ENCODE measurements at regions of chr5 and their contacts with region 1.

Region 1: DNA sequence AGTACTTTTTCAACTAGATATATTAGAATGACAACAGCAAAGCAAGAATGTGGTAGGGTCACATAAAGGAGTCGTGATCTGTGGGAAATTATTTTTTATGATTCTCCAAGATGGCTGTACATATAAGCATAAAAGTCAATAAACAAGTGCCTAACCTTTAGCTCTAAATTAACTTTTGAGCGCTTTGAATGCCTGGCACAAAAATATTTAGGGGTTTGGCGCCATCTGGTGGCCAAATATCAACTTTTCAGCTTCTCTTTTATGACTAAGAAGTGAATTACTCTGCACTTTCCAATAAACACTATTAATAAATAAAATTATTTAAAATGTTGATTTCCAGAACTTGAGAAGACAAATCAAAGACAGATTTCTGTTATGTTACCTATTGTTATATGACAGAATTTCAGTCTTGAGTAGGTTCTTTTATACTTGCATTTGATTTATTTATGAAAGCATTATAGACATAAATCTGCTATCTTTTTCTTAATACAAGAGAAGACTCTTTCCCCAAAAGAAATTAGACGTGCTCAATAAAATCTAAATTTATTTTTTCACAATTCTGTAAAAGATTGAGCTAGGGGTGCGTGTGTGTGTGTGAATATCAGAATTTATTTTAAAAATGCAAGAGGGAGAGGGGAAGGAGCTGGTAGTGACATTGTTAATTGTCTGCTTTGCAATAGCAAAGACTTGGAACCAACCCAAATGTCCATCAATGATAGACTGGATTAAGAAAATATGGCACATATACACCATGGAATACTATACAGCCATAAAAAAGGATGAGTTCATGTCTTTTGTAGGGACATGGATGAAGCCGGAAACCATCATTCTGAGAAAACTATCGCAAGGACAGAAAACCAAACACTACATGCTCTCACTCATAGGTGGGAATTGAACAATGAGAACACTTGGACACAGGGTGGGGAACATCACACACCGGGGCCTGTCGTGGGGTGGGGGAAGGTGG is 36.7 kb upstream of the ARRDC3 start:
- DNase-seq: peak; percentile 83
- H3K4me3 Mint-ChIP-seq: no peak overlapping the region
- H3K27ac Mint-ChIP-seq: no peak overlapping the region
- H3K4me1 Mint-ChIP-seq: peaks cover 8% of the 10 kb centered on the region
- H3K27me3 Mint-ChIP-seq: no peaks in the 10 kb centered on the region

Region 2: GRCh38 chr5:90802474-90803317 is 617.2 kb before region 1 on chr5:
- CTCF ChIA-PET with region 1: interaction called, 15 read pairs
- intact Hi-C with region 1: loop called (anchors 1 kb)
- DNase-seq: peak; percentile 21
- H3K4me3 Mint-ChIP-seq: no peak overlapping the region
- H3K27ac Mint-ChIP-seq: no peak overlapping the region
- H3K4me1 Mint-ChIP-seq: no peaks in the 10 kb centered on the region
- H3K27me3 Mint-ChIP-seq: peaks cover 4% of the 10 kb centered on the region

Region 3: GRCh38 chr5:90932052-90932699 is 487.7 kb before region 1 on chr5:
- CTCF ChIA-PET with region 1: interaction called, 19 read pairs
- intact Hi-C with region 1: loop called (anchors 1 kb)
- DNase-seq: peak; percentile 65
- H3K4me3 Mint-ChIP-seq: no peak overlapping the region
- H3K27ac Mint-ChIP-seq: no peak overlapping the region
- H3K4me1 Mint-ChIP-seq: peaks cover 5% of the 10 kb centered on the region
- H3K27me3 Mint-ChIP-seq: peaks cover 8% of the 10 kb centered on the region

Region 4: DNA sequence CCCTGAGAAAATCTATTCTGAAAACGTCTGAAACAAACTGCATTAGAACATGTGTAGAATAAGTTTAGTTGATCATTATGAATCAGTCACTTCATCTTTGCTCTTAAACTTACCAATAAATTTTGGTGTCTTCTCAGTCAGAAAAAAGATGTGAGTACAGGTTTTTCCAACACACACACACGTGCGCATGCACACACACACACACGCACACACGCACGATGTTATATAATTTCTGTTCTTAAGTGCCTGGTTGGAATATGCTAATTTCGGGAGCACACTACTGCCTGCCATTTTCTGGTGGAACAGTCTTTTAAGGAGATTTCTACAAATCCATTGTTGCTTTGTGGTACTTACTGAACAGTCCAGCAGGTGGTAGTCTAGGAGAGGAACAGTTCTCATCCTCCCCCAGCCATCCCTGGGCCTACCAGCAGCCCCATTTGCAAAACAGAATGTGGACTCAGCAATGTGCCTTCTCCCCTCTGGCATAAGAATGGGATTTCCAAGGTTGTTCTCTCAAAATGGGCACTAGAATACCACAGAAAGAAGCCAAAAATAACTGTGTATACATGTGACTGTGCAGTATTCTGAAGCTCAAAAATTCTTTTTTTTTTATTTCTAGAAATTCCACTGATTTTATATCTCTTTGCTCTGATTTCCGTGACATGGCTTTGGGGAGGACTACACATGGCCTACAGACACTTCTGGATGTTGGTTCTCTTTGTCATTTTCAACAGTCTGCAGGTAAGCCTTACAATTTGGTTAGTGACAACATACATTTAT is 318.1 kb before region 1 on chr5:
- CTCF ChIA-PET with region 1: interaction called, 19 read pairs
- intact Hi-C with region 1: loop called (anchors 1 kb)
- DNase-seq: peak; percentile 70
- H3K4me3 Mint-ChIP-seq: no peak overlapping the region
- H3K27ac Mint-ChIP-seq: no peak overlapping the region
- H3K4me1 Mint-ChIP-seq: no peaks in the 10 kb centered on the region
- H3K27me3 Mint-ChIP-seq: peaks cover 2% of the 10 kb centered on the region

Region 5: DNA sequence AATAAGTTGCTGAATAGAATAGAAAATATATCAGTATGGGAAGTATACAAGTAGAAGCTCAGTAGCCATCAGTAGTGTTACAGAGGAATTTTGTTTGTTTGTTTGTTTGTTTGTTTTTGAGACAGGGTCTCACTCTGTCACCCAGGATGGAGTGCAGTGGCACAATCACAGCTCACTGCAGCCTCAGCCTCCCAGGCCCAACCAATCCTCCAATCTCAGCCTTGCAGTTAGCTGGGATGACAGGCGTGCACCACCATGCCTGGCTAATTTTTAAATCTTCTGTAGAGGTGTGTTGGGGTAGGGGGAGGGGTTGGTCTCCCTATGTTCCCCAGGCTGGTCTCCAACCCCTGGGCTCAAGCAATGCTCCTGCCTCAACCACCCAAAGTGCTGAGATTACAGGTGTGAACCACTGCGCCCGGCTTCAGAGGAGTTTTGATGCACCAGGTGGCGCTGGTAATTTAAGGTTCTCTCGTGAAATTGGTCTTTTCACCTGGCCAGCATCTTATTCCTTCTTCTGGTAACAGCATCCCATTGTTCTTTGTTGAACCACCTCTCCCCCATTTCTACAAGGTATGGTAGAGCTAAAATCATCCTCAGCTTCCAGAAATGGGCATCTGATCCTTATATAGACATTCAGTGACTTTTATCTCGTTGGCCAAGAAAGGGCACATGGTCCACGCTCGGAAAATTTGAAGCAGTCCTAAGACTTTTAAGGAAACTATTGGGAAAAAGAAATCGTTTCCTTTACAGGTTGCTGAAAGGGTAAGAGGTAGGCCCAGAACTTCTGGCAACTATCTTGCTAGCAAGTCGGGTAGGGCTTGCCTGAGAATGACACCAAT is 193.8 kb before region 1 on chr5:
- CTCF ChIA-PET with region 1: interaction called, 36 read pairs
- intact Hi-C with region 1: loop called (anchors 1 kb)
- DNase-seq: peak; percentile 80
- H3K4me3 Mint-ChIP-seq: no peak overlapping the region
- H3K27ac Mint-ChIP-seq: no peak overlapping the region
- H3K4me1 Mint-ChIP-seq: peaks cover 4% of the 10 kb centered on the region
- H3K27me3 Mint-ChIP-seq: no peaks in the 10 kb centered on the region

Region 6: DNA sequence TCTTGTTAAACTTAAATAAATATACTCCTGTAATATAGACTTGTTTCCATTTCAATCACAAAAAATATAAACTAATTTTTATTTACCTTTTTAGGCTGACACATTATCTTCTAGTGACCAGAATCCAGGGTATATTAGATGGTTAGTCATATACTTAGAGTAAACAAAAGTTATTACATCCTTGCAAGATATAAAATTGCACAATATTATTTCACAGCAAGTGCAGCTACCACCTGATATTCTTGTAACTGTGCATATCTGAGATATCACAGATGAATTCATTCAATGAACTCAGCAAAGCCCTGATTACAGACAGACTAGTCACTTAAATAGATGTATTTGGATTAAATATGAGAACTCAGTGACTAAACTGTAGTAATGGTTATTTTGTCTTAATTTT is 11.1 kb before region 1 on chr5:
- CTCF ChIA-PET with region 1: interaction called, 28 read pairs
- intact Hi-C with region 1: no loop called
- DNase-seq: no peak
- H3K4me3 Mint-ChIP-seq: no peak overlapping the region
- H3K27ac Mint-ChIP-seq: no peak overlapping the region
- H3K4me1 Mint-ChIP-seq: no peaks in the 10 kb centered on the region
- H3K27me3 Mint-ChIP-seq: no peaks in the 10 kb centered on the region

Region 7: DNA sequence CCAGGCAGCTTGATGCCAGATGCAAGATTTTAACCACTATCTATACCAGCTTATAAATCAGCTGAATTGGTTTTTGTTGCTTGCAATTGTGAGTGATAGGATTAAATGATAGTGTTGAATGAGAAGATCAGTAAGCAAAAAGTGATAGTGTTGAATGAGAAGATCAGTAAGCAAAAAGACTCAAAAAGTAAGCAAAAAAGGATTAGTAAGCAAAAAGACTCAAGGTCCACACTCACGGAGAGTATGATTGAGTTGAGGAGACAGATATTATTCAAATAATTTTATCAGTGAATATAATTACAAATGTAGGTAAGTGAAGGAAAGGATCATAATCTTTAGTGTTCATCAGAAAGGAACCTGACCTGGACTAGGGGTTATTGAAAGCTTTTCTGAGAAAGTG is 21.2 kb after region 1 on chr5:
- CTCF ChIA-PET with region 1: interaction called, 10 read pairs
- intact Hi-C with region 1: no loop called
- DNase-seq: no peak
- H3K4me3 Mint-ChIP-seq: no peak overlapping the region
- H3K27ac Mint-ChIP-seq: no peak overlapping the region
- H3K4me1 Mint-ChIP-seq: peaks cover 5% of the 10 kb centered on the region
- H3K27me3 Mint-ChIP-seq: no peaks in the 10 kb centered on the region

Region 8: GRCh38 chr5:91493086-91493485 is 73.2 kb after region 1 on chr5:
- CTCF ChIA-PET with region 1: no interaction called
- intact Hi-C with region 1: no loop called
- DNase-seq: no peak
- H3K4me3 Mint-ChIP-seq: no peak overlapping the region
- H3K27ac Mint-ChIP-seq: no peak overlapping the region
- H3K4me1 Mint-ChIP-seq: peaks cover 18% of the 10 kb centered on the region
- H3K27me3 Mint-ChIP-seq: no peaks in the 10 kb centered on the region